CD4-positive, alpha-beta T cell (primary cell): ENCODE measurements at regions of chr22 and their contacts with region 1.

Region 1: GRCh38 chr22:41780746-41781505 is 19.6 kb upstream of the CCDC134 start:
- DNase-seq: peak; percentile 78 to 98 (median 88)
- ATAC-seq: peak; percentile 91
- H3K4me3 ChIP-seq: peak overlapping the region; percentile 69
- H3K4me3 Mint-ChIP-seq: peak overlapping the region; percentile 86
- H3K27ac ChIP-seq: peak overlapping the region; percentile 77 to 94
- H3K27ac Mint-ChIP-seq: peak overlapping the region; percentile 96
- H3K4me1 ChIP-seq: peaks cover 57% of the 10 kb centered on the region
- H3K4me1 Mint-ChIP-seq: peaks cover 54% of the 10 kb centered on the region
- H3K27me3 ChIP-seq: no peaks in the 10 kb centered on the region
- H3K27me3 Mint-ChIP-seq: no peaks in the 10 kb centered on the region
- CTCF ChIP-seq: no peak

Region 2: DNA sequence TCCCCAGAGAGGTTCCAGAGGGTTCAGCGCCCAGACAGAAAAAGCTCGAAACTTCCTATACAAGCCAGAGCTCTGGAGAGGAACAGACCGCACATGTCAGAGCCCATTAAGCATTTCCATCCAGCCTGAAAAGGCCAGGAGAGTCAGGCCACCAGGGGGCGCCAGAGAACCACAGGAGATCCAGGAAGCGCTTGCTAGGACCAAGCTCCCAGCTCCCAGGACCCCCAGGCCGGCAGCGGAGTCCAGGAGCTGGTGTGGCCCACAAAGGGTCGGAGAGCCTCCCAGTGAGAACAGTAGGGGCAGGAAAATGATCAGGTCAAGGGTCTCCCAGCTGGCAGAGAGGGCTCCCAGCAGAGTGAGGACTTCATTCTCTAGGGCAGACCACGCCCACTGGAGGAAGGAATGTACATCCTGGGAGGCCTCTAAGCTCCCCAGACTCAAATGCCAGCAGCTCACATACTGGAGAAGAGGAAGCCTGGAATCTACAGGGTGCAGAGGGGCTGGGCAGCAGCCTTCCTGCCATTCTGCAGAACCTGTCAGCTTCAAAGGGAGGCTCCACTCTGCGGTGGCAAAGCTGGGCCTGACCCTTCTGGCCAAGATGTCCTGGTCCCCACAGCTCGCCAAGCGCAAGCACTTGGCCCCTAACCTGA is 83.7 kb before region 1 on chr22:
- CTCF ChIA-PET with region 1: interaction called, 9 read pairs
- POLR2A ChIA-PET with region 1: interaction called, 8 read pairs
- intact Hi-C with region 1: loop called in 1 of 2 experiments (anchors 5 kb)
- DNase-seq: peak; percentile 84 to 98 (median 92)
- ATAC-seq: peak; percentile 78
- H3K4me3 ChIP-seq: peak overlapping the region; percentile 24
- H3K4me3 Mint-ChIP-seq: peak overlapping the region; percentile 59
- H3K27ac ChIP-seq: no peak overlapping the region
- H3K27ac Mint-ChIP-seq: no peak overlapping the region
- H3K4me1 ChIP-seq: peaks cover 24% of the 10 kb centered on the region
- H3K4me1 Mint-ChIP-seq: peaks cover 12% of the 10 kb centered on the region
- H3K27me3 ChIP-seq: no peaks in the 10 kb centered on the region
- H3K27me3 Mint-ChIP-seq: no peaks in the 10 kb centered on the region
- CTCF ChIP-seq: peak; percentile 98

Region 3: DNA sequence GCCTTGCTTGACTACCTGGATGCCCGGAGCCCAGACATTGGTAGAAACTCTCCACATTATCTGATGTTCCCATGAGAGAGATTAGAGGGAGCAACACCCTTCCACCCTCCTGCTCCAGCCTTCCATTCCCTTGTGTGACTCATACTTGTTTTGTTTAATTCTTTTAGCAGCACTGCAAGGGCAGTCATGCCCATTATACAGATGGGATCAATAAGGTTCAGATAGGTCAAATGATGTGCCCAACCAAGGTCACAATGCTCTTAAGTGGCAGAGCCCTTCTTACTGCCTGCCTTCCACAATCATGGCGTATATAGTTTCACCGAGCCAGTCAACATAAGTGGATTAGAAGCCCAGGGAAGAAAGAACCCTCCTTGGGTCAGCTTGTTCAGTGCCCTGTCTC is 12.9 kb after region 1 on chr22:
- CTCF ChIA-PET with region 1: interaction called, 24 read pairs
- POLR2A ChIA-PET with region 1: interaction called, 472 read pairs
- intact Hi-C with region 1: no loop called
- DNase-seq: no peak
- ATAC-seq: no peak
- H3K4me3 ChIP-seq: no peak overlapping the region
- H3K4me3 Mint-ChIP-seq: no peak overlapping the region
- H3K27ac ChIP-seq: no peak overlapping the region
- H3K27ac Mint-ChIP-seq: no peak overlapping the region
- H3K4me1 ChIP-seq: no peaks in the 10 kb centered on the region
- H3K4me1 Mint-ChIP-seq: peaks cover 21% of the 10 kb centered on the region
- H3K27me3 ChIP-seq: no peaks in the 10 kb centered on the region
- H3K27me3 Mint-ChIP-seq: no peaks in the 10 kb centered on the region
- CTCF ChIP-seq: no peak

Region 4: DNA sequence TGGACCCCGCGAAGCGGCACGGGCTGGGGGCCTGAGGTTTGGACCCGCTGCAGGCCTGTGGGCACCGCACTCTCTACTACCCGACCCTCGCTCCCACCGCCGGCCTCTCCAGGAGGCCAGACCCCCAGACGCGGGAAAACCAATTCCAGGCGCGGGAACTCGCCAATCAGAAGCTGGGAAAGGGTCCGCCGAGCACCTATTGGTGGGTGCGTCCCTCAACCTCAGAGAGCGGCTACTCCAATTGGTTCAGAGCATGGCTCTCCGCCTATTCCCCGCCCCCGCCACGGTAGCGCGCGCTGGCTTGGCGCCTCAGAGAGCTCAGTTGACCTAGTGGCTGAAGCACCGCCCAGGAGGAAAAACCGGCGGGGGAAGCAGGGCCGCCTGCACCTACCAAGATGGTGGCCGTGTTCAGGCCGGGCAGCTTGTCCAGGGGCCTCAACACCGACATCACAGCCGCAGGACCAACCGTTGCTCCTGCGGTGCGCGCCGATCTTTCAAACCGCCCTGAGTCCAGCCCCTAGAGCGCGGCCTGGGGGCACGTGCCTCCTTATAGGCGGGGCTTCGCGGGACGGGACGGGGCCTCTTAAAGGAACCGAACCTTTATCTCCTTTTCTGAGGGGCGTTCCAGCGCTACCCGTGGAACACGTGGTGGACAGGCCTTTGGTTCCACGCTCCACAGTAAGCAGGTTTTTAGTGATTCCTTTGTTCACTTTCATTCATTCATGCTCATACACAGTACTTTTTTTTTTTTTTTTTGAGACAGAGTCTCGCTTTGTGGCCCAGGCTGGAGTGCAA is 165.9 kb after region 1 on chr22 and contains the start of gene CENPM:
- CTCF ChIA-PET with region 1: interaction called, 3 read pairs
- POLR2A ChIA-PET with region 1: interaction called, 11 read pairs
- intact Hi-C with region 1: no loop called
- DNase-seq: peak; percentile 71 to 91 (median 82)
- ATAC-seq: peak; percentile 94
- H3K4me3 ChIP-seq: peak within 1 kb of the TSS; percentile 95
- H3K4me3 Mint-ChIP-seq: peak within 1 kb of the TSS; percentile 97
- H3K27ac ChIP-seq: no peak within 1 kb of the TSS
- H3K27ac Mint-ChIP-seq: peak within 1 kb of the TSS; percentile 62
- H3K4me1 ChIP-seq: peaks cover 25% of the 10 kb centered on the region
- H3K4me1 Mint-ChIP-seq: peaks cover 15% of the 10 kb centered on the region
- H3K27me3 ChIP-seq: no peaks in the 10 kb centered on the region
- H3K27me3 Mint-ChIP-seq: no peaks in the 10 kb centered on the region
- CTCF ChIP-seq: no peak
- total RNA-seq, gene CENPM: 7.6 to 8.4 TPM

Region 5: GRCh38 chr22:42151924-42152635 is 371.2 kb after region 1 on chr22:
- CTCF ChIA-PET with region 1: no interaction called
- POLR2A ChIA-PET with region 1: no interaction called
- intact Hi-C with region 1: no loop called
- DNase-seq: no peak
- ATAC-seq: no peak
- H3K4me3 ChIP-seq: no peak overlapping the region
- H3K4me3 Mint-ChIP-seq: no peak overlapping the region
- H3K27ac ChIP-seq: no peak overlapping the region
- H3K27ac Mint-ChIP-seq: no peak overlapping the region
- H3K4me1 ChIP-seq: no peaks in the 10 kb centered on the region
- H3K4me1 Mint-ChIP-seq: no peaks in the 10 kb centered on the region
- H3K27me3 ChIP-seq: no peaks in the 10 kb centered on the region
- H3K27me3 Mint-ChIP-seq: no peaks in the 10 kb centered on the region
- CTCF ChIP-seq: no peak